K562 (cell line): ENCODE measurements at regions of chr5 and their contacts with region 1.

Region 1: DNA sequence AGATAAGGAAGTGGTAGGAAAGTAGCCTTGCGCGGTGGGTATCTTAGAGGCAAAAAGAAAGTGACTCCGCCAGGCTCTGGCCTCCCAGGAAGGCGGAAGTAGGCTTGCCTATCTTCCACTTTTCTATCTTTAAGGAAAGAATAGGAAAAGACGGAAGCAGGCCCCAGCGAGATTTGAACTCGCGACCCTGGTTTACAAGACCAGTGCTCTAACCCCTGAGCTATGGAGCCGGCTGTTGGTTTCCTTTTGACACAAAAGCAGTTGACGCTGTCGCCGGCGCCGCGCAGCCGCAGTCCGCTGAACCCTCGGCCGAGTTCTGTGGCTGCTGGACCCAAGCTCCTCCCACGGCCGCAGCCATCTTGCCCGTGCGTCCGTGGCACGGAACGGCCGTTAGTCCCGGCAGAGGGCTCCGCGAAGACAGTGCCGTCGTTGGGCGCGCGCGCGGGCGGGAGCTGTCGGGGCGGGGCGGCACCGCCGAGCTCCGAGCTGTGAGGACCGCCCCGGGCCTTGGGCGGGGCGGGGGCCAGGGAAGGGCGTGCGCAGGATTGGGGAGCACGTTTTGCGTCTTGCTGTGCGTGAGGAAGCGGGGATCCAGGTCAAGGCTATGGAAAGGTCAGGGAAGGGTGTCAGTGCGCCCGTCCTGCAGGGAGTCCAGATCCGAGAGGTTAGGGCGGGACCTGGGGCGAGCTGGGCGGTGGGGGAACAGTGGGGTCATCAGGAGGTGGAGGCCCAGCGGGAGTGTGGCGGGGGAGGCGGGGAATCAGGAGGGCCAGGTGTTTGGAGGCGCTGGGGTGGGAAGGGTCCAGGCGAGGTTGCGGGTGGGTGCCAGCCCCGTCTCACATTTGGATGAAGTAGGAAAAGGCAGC is 13.2 kb downstream of the TRIM7 start:
- DNase-seq: peak; percentile 84 to 96 (median 88)
- ATAC-seq: peak; percentile 77
- H3K4me3 ChIP-seq: peak overlapping the region; percentile 67
- H3K27ac ChIP-seq: peak overlapping the region; percentile 91
- H3K4me1 ChIP-seq: peaks cover 26 to 68% of the 10 kb centered on the region in 2 experiments; a peak in 4 of 5 replicates
- H3K27me3 ChIP-seq: no peaks in the 10 kb centered on the region
- CTCF ChIP-seq: peak in 1 of 3 experiments; percentile 11; a peak in 1 of 6 replicates
- EP300 ChIP-seq: peak; percentile 66
- POLR2A ChIP-seq: peak; percentile 74
- RAD21 ChIP-seq: peak in 1 of 2 experiments; percentile 17; a peak in 2 of 4 replicates

Region 2: GRCh38 chr5:181043285-181044092 is 148.3 kb before region 1 on chr5:
- CTCF ChIA-PET with region 1: no interaction called
- POLR2A ChIA-PET with region 1: no interaction called
- in situ Hi-C with region 1: no loop called
- intact Hi-C with region 1: no loop called
- DNase-seq: peak; percentile 31 to 69 (median 52)
- ATAC-seq: peak; percentile 78
- H3K4me3 ChIP-seq: no peak overlapping the region
- H3K27ac ChIP-seq: no peak overlapping the region
- H3K4me1 ChIP-seq: peaks cover 9 to 29% of the 10 kb centered on the region in 2 experiments; a peak in 4 of 5 replicates
- H3K27me3 ChIP-seq: peaks cover 0 to 4% of the 10 kb centered on the region in 2 experiments; a peak in 2 of 5 replicates
- CTCF ChIP-seq: peak; percentile 68 to 81 (median 76); a peak in 5 of 6 replicates
- EP300 ChIP-seq: no peak
- POLR2A ChIP-seq: no peak
- RAD21 ChIP-seq: peak; percentile 53 to 86

Region 3: DNA sequence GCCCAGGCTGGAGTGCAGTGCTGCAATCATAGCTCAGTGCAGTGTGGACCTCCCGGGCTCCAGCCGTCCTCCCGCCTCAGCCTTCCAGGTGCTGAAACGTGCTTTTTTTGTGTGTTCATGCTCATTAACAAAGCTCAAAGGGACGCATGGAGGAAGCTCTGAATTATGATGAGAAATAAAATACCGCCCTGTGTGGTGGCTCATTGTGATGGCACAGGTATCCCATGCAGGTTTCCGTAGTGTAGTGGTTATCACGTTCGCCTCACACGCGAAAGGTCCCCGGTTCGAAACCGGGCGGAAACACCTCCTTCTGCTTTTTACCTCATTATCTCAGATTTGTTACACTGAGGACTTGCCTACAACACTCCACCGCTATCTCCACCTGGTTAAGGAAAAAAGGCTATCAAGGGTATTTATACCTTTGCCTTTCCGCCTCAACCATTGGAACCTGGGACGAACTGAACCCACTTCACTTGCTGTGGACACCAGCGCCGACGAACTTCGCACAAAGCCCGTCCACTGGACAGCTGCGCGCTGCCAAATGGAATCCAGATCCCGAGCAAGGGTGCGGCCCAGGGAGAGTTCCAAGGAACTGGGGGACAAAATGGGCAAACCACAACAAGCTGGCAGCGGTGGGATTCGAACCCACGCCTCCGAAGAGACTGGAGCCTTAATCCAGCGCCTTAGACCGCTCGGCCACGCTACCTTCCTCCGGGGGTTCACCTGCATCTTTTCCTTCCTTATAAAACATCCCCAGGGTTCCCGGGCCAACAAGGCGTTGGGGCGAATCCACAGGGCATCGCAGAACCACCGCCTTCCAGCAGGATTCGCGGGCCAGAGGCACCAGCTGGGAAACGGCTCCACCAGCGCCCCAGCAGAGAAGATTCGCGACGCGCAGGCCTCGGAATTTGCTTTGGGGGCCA is 18.1 kb before region 1 on chr5:
- CTCF ChIA-PET with region 1: interaction called, 3 read pairs
- POLR2A ChIA-PET with region 1: interaction called, 8 read pairs
- in situ Hi-C with region 1: no loop called
- intact Hi-C with region 1: loop called (anchors 2 kb)
- DNase-seq: peak; percentile 36 to 87 (median 44)
- ATAC-seq: peak; percentile 42
- H3K4me3 ChIP-seq: peak overlapping the region; percentile 50
- H3K27ac ChIP-seq: peak overlapping the region; percentile 75
- H3K4me1 ChIP-seq: peaks cover 21 to 43% of the 10 kb centered on the region in 2 experiments; a peak in 4 of 5 replicates
- H3K27me3 ChIP-seq: no peaks in the 10 kb centered on the region
- CTCF ChIP-seq: no peak
- EP300 ChIP-seq: no peak
- POLR2A ChIP-seq: 0 out of 2 replicates have a peak, but pooled peaks have one; percentile 43
- RAD21 ChIP-seq: no peak; a peak in 1 of 4 replicates

Region 4: DNA sequence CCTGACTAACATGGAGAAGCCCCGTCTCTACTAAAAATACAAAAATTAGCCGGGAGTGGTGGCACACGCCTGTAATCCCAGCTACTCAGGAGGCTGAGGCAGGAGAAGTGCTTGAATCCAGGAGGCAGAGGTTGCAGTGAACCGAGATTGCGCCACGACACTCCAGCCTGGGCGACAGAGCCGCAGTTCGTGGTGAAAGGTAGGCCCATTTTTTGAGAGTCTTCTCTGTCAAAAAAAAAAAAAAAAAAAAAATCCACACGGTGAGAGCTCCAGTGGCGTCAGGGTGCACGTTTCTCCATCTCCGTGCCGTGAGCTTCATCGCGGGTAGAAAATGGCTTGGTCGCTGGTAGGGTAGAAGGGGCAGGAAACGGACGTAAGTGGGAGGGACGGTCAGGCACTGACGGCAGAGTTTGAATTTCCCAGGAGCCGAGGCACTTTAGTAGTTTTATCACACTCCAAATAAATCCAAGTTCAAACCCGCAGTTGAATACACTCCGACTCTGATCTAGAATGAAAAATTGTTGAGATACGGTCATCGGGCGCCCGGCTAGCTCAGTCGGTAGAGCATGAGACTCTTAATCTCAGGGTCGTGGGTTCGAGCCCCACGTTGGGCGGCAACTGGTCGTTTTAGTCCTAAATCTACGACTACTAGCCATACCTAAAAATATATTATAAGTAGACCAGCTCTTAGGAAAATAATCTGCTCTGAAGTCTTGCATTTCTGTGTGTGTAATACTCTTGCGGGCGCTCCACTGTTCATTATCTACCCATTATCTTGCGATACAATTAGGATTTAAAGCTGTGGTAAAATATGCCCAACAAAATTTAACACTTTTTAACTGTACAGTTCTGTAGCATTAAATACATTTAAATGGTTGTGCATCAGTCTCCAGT is 15.7 kb after region 1 on chr5:
- CTCF ChIA-PET with region 1: no interaction called
- POLR2A ChIA-PET with region 1: interaction called, 69 read pairs
- in situ Hi-C with region 1: no loop called
- intact Hi-C with region 1: loop called (anchors 1 kb)
- DNase-seq: peak in 3 of 4 experiments; percentile 36 to 94 (median 71)
- ATAC-seq: peak; percentile 53
- H3K4me3 ChIP-seq: peak overlapping the region; percentile 65
- H3K27ac ChIP-seq: peak overlapping the region; percentile 72
- H3K4me1 ChIP-seq: peaks cover 29 to 35% of the 10 kb centered on the region in 2 experiments; a peak in 4 of 5 replicates
- H3K27me3 ChIP-seq: no peaks in the 10 kb centered on the region
- CTCF ChIP-seq: no peak
- EP300 ChIP-seq: peak; percentile 76
- POLR2A ChIP-seq: 0 out of 2 replicates have a peak, but pooled peaks have one; percentile 35
- RAD21 ChIP-seq: no peak; a peak in 1 of 4 replicates

Region 5: GRCh38 chr5:181217111-181217802 is 25.5 kb after region 1 on chr5:
- CTCF ChIA-PET with region 1: interaction called, 4 read pairs
- POLR2A ChIA-PET with region 1: interaction called, 8 read pairs
- in situ Hi-C with region 1: no loop called
- intact Hi-C with region 1: loop called (anchors 1 kb)
- DNase-seq: peak; percentile 44 to 83 (median 50)
- ATAC-seq: peak; percentile 67
- H3K4me3 ChIP-seq: peak overlapping the region; percentile 51
- H3K27ac ChIP-seq: peak overlapping the region; percentile 87
- H3K4me1 ChIP-seq: peaks cover 4 to 32% of the 10 kb centered on the region in 2 experiments; a peak in 4 of 5 replicates
- H3K27me3 ChIP-seq: no peaks in the 10 kb centered on the region
- CTCF ChIP-seq: peak; percentile 39 to 60 (median 46); a peak in 5 of 6 replicates
- EP300 ChIP-seq: no peak
- POLR2A ChIP-seq: no peak
- RAD21 ChIP-seq: 0 out of 4 replicates have a peak, but pooled peaks of 1 of the 2 experiments have one; percentile 14

Region 6: DNA sequence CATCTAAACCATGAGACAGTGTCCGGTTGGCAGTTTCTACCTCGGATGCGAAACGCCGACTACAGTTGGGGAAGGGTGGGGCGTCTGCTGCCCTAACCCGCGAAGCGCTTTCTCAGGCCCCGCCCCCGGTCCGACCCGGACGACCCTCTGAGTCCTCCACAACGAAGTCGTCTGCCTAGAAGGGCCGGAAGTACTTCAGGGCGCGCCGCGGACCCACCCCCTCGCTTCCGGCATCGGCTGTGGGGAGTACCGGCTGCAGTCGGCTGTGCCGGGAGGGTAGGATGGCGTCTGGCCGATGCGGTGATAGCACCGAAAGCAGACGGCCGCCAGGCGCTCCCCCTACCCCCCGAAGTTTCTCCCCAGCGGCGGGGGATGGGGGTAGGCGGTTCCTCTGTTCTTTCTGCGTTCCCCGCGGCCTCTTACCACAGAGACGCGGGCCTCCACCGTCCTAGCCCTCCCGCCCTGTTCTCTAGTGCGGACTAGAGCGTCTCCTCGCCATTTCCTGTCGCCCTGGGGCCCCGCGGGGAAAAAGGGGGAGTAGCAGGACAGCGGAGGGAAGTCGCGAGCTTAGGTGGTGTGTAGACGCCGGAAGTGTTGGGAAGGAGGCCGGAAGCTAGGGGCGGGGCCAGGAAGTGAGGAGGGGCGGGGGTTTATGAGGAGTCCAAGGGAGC is 31.4 kb after region 1 on chr5 and contains the start of gene TRIM41:
- CTCF ChIA-PET with region 1: interaction called, 4 read pairs
- POLR2A ChIA-PET with region 1: interaction called, 8 read pairs
- in situ Hi-C with region 1: no loop called
- intact Hi-C with region 1: loop called (anchors 1 kb)
- DNase-seq: peak; percentile 81 to 99 (median 86)
- ATAC-seq: peak; percentile 79
- H3K4me3 ChIP-seq: peak within 1 kb of the TSS; percentile 86
- H3K27ac ChIP-seq: peak within 1 kb of the TSS; percentile 90
- H3K4me1 ChIP-seq: peaks cover 0 to 42% of the 10 kb centered on the region in 2 experiments; a peak in 4 of 5 replicates
- H3K27me3 ChIP-seq: no peaks in the 10 kb centered on the region
- CTCF ChIP-seq: peak; percentile 7 to 44 (median 29); a peak in 3 of 6 replicates
- EP300 ChIP-seq: peak; percentile 63; the same call in 1 of the 2 replicates
- POLR2A ChIP-seq: peak; percentile 98
- RAD21 ChIP-seq: no peak
- polyA plus RNA-seq, gene TRIM41: 1.8 to 2.1 TPM

Region 7: GRCh38 chr5:181260387-181261319 is 68.9 kb after region 1 on chr5 and contains the start of gene TRIM52:
- CTCF ChIA-PET with region 1: no interaction called
- POLR2A ChIA-PET with region 1: interaction called, 3 read pairs
- in situ Hi-C with region 1: no loop called
- intact Hi-C with region 1: loop called (anchors 5 kb)
- DNase-seq: peak; percentile 77 to 94 (median 82)
- ATAC-seq: peak; percentile 88
- H3K4me3 ChIP-seq: peak within 1 kb of the TSS; percentile 98
- H3K27ac ChIP-seq: peak within 1 kb of the TSS; percentile 99
- H3K4me1 ChIP-seq: peaks cover 21 to 29% of the 10 kb centered on the region in 2 experiments; a peak in 4 of 5 replicates
- H3K27me3 ChIP-seq: no peaks in the 10 kb centered on the region
- CTCF ChIP-seq: no peak
- EP300 ChIP-seq: 0 out of 2 replicates have a peak, but pooled peaks have one; percentile 16
- POLR2A ChIP-seq: peak; percentile 76
- RAD21 ChIP-seq: peak in 1 of 2 experiments; percentile 23; a peak in 1 of 4 replicates
- polyA plus RNA-seq, gene TRIM52: 3.3 to 3.7 TPM

Region 8: GRCh38 chr5:181271081-181271480 is 79.3 kb after region 1 on chr5:
- CTCF ChIA-PET with region 1: no interaction called
- POLR2A ChIA-PET with region 1: no interaction called
- in situ Hi-C with region 1: no loop called
- intact Hi-C with region 1: no loop called
- DNase-seq: no peak
- ATAC-seq: no peak
- H3K4me3 ChIP-seq: no peak overlapping the region
- H3K27ac ChIP-seq: no peak overlapping the region
- H3K4me1 ChIP-seq: peaks cover 13 to 14% of the 10 kb centered on the region in 2 experiments; a peak in 4 of 5 replicates
- H3K27me3 ChIP-seq: no peaks in the 10 kb centered on the region
- CTCF ChIP-seq: no peak
- EP300 ChIP-seq: no peak
- POLR2A ChIP-seq: no peak
- RAD21 ChIP-seq: no peak

Region 9: GRCh38 chr5:181281077-181281983 is 89.6 kb after region 1 on chr5:
- CTCF ChIA-PET with region 1: no interaction called
- POLR2A ChIA-PET with region 1: no interaction called
- in situ Hi-C with region 1: no loop called
- intact Hi-C with region 1: no loop called
- DNase-seq: peak; percentile 82 to 96 (median 85)
- ATAC-seq: peak; percentile 99
- H3K4me3 ChIP-seq: peak overlapping the region; percentile 86
- H3K27ac ChIP-seq: peak overlapping the region; percentile 98
- H3K4me1 ChIP-seq: peaks cover 0 to 24% of the 10 kb centered on the region in 2 experiments; a peak in 3 of 5 replicates
- H3K27me3 ChIP-seq: no peaks in the 10 kb centered on the region
- CTCF ChIP-seq: no peak
- EP300 ChIP-seq: no peak
- POLR2A ChIP-seq: peak; percentile 98
- RAD21 ChIP-seq: no peak